Endothelial cell of umbilical vein (primary cell): ENCODE measurements at regions of chr7 and their contacts with region 1.

Region 1: DNA sequence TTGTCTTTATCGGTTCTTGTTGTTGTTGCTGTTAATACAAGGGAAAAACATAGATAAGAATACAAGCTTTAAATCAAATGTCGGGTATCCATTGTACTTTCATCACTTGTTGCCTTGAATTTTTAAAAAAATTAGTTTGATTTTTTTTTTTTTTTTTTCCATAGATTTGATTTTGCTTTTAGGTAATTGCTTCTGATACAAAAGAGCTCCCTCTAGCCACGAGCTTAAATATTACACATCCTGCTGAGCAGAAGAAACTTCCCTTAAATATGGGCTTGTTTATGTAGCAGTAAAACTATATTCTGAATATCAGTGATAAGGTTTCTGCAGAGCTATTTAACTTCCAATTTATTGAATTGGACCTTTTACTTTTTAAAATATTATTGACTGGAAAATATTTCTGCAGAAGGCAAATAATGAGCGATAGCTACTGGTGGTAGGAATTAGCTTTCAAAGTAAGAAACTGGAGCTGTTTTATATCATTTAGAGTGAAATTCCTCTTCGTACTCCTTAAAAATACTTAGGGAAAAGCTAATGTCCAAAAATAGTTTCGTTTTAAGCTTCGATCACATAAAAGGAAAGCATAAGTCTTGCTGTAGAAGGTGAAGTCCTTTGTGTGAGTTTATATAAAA is 216.9 kb downstream of the POLR1F start:
- DNase-seq: peak; percentile 54
- H3K4me3 ChIP-seq: no peak overlapping the region
- H3K27ac ChIP-seq: no peak overlapping the region
- H3K4me1 ChIP-seq: no peaks in the 10 kb centered on the region
- H3K27me3 ChIP-seq: no peaks in the 10 kb centered on the region
- CTCF ChIP-seq: peak; percentile 30 to 37
- POLR2A ChIP-seq: no peak

Region 2: DNA sequence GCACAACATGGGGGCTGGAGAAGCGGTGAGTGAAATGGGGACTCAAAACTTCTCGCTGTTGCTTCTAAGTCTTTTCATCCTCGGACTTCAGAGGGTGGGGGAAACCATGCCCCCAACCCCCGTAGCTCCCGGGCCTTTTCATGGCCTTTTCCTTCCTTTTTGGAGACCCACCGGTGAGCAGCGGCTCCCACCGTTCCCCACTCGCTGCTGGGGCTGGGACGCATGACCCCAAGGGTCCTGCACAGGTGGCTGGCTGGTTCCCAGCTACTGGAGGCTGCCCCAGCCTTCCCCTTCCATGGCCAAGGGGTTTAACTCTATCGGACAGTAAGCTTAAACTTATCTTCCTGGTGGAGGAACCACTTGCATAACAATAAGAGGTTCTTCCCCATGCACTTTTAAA is 152.4 kb before region 1 on chr7:
- CTCF ChIA-PET with region 1: no interaction called
- POLR2A ChIA-PET with region 1: no interaction called
- dilution Hi-C with region 1: no loop called
- intact Hi-C with region 1: no loop called
- DNase-seq: no peak
- H3K4me3 ChIP-seq: no peak overlapping the region
- H3K27ac ChIP-seq: no peak overlapping the region
- H3K4me1 ChIP-seq: no peaks in the 10 kb centered on the region
- H3K27me3 ChIP-seq: no peaks in the 10 kb centered on the region
- CTCF ChIP-seq: no peak
- POLR2A ChIP-seq: no peak

Region 3: DNA sequence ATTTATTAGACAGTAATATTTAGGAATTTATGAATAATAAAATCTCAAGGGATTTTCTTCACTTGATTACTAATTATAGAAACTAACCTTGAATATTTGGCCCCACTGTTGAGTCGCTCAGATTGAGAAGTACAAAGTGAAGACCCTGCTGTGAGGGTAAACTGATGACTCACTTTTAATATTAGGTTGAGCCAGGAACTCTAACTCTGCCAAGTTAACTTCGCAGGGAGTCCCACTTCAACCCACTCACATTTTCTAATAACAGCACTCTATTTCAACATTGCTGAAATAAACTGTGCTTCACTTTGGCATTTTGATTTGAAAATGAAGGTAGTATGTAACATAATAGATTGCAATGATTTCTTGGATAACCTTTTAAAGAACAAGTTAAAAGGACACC is 16.2 kb after region 1 on chr7:
- CTCF ChIA-PET with region 1: interaction called, 29 read pairs
- POLR2A ChIA-PET with region 1: no interaction called
- dilution Hi-C with region 1: no loop called
- intact Hi-C with region 1: no loop called
- DNase-seq: no peak
- H3K4me3 ChIP-seq: no peak overlapping the region
- H3K27ac ChIP-seq: no peak overlapping the region
- H3K4me1 ChIP-seq: no peaks in the 10 kb centered on the region
- H3K27me3 ChIP-seq: no peaks in the 10 kb centered on the region
- CTCF ChIP-seq: no peak
- POLR2A ChIP-seq: no peak

Region 4: GRCh38 chr7:19939746-19940145 is 447.8 kb after region 1 on chr7:
- CTCF ChIA-PET with region 1: no interaction called
- POLR2A ChIA-PET with region 1: no interaction called
- dilution Hi-C with region 1: no loop called
- intact Hi-C with region 1: no loop called
- DNase-seq: no peak
- H3K4me3 ChIP-seq: no peak overlapping the region
- H3K27ac ChIP-seq: no peak overlapping the region
- H3K4me1 ChIP-seq: no peaks in the 10 kb centered on the region
- H3K27me3 ChIP-seq: no peaks in the 10 kb centered on the region
- CTCF ChIP-seq: no peak
- POLR2A ChIP-seq: no peak